ENCODE measurements at regions of chr5 and their contacts with region 1.

Region 1: DNA sequence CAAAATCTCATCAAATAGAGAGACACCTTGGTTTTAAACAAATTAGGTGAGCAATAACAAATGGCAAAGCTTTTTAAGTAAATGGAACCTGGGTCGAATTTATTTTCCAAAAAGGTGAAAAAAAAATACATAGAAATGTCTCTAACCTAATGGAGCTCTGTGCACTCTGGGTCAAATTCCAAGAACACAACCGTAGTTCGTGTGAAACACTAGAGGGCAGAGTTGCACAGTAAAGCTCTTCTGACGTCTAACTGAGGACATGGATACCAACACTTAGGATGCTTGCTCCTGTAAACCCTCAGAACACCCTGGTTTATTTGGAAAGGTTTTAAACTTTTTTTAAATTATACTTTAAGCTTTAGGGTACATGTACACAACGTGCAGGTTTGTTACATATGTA is 18.9 kb downstream of the MARCHF11 start:
- DNase-seq: peak; percentile 12
- ATAC-seq: peak; percentile 70; the same call in 1 of the 2 replicates
- H3K4me3 ChIP-seq: no peak overlapping the region
- H3K27ac ChIP-seq: no peak overlapping the region
- H3K4me1 ChIP-seq: no peaks in the 10 kb centered on the region
- H3K27me3 ChIP-seq: no peaks in the 10 kb centered on the region
- CTCF ChIP-seq: peak in 2 of 3 experiments; percentile 63 to 66; a peak in 4 of 6 replicates
- POLR2A ChIP-seq: no peak
- RAD21 ChIP-seq: peak; percentile 42

Region 2: DNA sequence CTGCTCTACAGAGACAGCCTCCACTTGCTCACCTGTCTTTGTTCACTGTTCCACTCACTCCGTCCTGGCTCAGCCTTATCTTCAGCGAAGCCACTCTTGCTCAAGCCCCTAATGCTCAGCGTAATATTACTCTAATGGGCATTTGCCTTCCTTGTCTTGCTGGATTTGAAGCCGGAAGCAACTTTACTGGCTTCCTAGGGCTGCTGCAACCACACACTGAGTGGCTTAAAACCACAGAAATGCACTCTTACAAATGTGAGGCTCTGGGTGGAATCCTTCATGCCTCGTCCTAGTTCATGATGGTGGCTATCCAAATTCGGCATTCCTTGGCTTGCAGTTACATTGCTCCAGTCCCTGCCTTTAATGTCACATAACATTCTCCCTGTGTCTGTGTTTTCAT is 104.4 kb after region 1 on chr5:
- CTCF ChIA-PET with region 1: no interaction called
- POLR2A ChIA-PET with region 1: no interaction called
- RAD21 ChIA-PET with region 1: no interaction called
- intact Hi-C with region 1: no loop called
- DNase-seq: no peak
- ATAC-seq: no peak
- H3K4me3 ChIP-seq: no peak overlapping the region
- H3K27ac ChIP-seq: no peak overlapping the region
- H3K4me1 ChIP-seq: no peaks in the 10 kb centered on the region
- H3K27me3 ChIP-seq: no peaks in the 10 kb centered on the region
- CTCF ChIP-seq: no peak
- POLR2A ChIP-seq: no peak
- RAD21 ChIP-seq: no peak

Region 3: DNA sequence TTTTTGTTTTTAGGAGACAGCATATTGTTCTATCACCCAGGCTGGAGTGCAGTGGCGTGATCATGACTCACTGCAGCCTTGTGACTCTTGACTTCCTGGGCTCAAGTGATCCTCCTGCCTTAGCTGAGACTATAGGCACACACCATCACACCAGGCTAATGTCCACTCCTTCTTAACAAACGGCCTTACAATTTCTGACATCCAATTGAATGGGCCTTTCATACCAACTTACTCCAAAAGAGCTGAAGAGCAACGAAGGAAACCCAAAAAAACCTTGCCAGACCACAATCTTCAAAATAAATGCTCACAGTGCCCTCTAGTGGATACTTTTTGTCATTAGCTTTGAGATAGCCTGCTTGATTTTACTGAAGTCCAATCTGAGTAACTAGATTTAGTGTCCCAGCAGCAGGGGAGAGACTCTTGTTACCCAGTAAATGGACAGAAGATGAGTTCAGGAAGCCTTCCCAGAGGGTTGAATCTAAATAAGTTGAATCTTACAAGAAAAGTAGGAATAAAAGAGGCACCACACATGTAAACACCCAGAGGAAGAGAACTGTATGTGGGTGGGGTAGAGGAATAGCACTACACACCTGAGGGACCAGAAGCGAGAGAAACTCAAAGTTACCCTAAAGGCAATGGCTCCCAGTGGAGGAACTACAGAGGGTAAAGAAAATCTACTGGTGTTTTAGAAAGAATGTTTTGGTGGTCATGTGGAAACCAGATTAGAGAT is 295.6 kb after region 1 on chr5:
- CTCF ChIA-PET with region 1: interaction called, 18 read pairs
- POLR2A ChIA-PET with region 1: no interaction called
- RAD21 ChIA-PET with region 1: interaction called in 1 of 2 experiments, 3 read pairs
- intact Hi-C with region 1: loop called (anchors 2 kb)
- DNase-seq: peak; percentile 49
- ATAC-seq: peak; percentile 82
- H3K4me3 ChIP-seq: no peak overlapping the region
- H3K27ac ChIP-seq: no peak overlapping the region
- H3K4me1 ChIP-seq: no peaks in the 10 kb centered on the region
- H3K27me3 ChIP-seq: no peaks in the 10 kb centered on the region
- CTCF ChIP-seq: peak; percentile 32 to 84 (median 54); a peak in 5 of 6 replicates
- POLR2A ChIP-seq: no peak
- RAD21 ChIP-seq: peak; percentile 47

Measured in HCT116 (cell line).